Panc1 (cell line): ENCODE measurements at regions of chr5 and their contacts with region 1.

Region 1: GRCh38 chr5:169970911-169971765 is 9.2 kb downstream of the INSYN2B start:
- DNase-seq: no peak
- ATAC-seq: 0 out of 2 replicates have a peak, but pooled peaks have one; percentile 17
- H3K4me3 ChIP-seq: no peak overlapping the region
- H3K27ac ChIP-seq: no peak overlapping the region
- H3K4me1 ChIP-seq: no peaks in the 10 kb centered on the region
- H3K27me3 ChIP-seq: no peaks in the 10 kb centered on the region
- CTCF ChIP-seq: no peak

Region 2: GRCh38 chr5:169716278-169716677 is 254.9 kb before region 1 on chr5:
- CTCF ChIA-PET with region 1: no interaction called
- POLR2A ChIA-PET with region 1: no interaction called
- in situ Hi-C with region 1: no loop called
- intact Hi-C with region 1: no loop called
- DNase-seq: no peak
- ATAC-seq: no peak
- H3K4me3 ChIP-seq: no peak overlapping the region
- H3K27ac ChIP-seq: no peak overlapping the region
- H3K4me1 ChIP-seq: no peaks in the 10 kb centered on the region
- H3K27me3 ChIP-seq: no peaks in the 10 kb centered on the region
- CTCF ChIP-seq: no peak

Region 3: DNA sequence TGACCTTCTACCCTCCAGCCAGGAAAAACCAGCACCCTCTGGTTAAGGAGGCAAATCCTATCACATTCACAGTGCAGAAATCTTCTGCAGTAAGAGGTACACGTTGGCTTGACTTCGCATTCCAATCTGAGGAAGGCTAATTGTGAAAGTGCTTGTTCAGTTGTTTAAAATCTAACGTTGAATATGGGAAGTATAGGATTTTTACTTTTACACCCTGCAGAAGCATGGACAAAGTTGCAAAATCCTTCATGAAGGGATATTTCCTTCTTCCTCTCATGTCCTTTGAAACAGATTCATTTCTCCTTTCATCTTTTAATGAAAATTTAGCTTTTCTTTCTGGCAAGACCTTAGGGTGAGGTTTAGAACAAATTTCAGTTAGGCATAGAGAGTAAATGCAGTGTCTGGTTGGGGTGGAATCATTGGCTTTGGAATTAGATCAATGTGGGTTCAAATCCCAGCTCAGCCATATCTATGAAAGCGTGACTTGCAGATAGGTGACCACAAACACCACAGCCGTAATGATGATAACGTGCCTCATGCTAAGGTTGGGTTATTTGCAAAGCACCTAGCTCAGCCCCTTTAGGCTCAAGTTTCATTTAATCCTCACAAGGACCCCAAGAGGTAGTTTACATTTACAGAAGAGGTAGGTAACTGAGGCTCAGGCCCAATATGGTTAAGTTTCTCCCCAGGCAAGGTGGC is 219.4 kb after region 1 on chr5:
- CTCF ChIA-PET with region 1: interaction called, 11 read pairs
- POLR2A ChIA-PET with region 1: no interaction called
- in situ Hi-C with region 1: no loop called
- intact Hi-C with region 1: no loop called
- DNase-seq: no peak
- ATAC-seq: no peak
- H3K4me3 ChIP-seq: no peak overlapping the region
- H3K27ac ChIP-seq: no peak overlapping the region; the same call in 1 of the 2 replicates
- H3K4me1 ChIP-seq: no peaks in the 10 kb centered on the region
- H3K27me3 ChIP-seq: no peaks in the 10 kb centered on the region
- CTCF ChIP-seq: no peak